Endothelial cell of umbilical vein (primary cell): ENCODE measurements at regions of chr3 and their contacts with region 1.

Region 1: DNA sequence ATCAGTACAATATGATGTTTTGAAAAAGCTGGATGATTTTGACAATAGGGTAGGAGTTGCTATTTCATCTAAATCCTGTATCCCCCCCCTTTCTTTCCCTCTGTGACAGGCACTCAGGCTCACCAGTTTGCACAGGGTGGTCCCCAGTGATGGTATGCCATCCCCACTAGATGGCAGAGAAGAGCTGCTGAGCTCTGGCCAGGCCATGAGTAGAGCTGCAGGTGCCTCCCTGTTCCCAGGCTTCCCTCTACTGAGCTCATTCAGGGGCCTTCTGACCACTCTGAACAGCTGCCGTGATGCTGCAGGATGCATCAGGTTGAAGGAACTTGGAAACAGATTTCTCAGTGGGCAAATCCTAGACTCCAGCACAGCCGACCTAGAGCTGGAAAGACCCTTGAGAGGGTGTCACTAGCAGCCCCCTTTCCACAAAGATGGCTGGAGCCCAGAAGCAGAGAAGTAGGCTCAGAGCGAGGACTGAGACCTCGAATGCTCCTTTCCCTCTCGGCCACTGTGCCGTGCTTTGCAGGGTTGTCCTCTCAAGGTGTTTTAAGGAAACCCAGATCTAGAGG is 45.1 kb downstream of the EFCAB12 start:
- DNase-seq: peak; percentile 71
- H3K4me3 ChIP-seq: no peak overlapping the region
- H3K27ac ChIP-seq: no peak overlapping the region
- H3K4me1 ChIP-seq: peaks cover 19% of the 10 kb centered on the region
- H3K27me3 ChIP-seq: no peaks in the 10 kb centered on the region
- CTCF ChIP-seq: peak; percentile 93 to 95
- POLR2A ChIP-seq: peak; percentile 34

Region 2: GRCh38 chr3:129352650-129353588 is 30.5 kb before region 1 on chr3:
- CTCF ChIA-PET with region 1: interaction called, 10 read pairs
- POLR2A ChIA-PET with region 1: no interaction called
- dilution Hi-C with region 1: no loop called
- intact Hi-C with region 1: no loop called
- DNase-seq: peak; percentile 60
- H3K4me3 ChIP-seq: no peak overlapping the region
- H3K27ac ChIP-seq: no peak overlapping the region
- H3K4me1 ChIP-seq: peaks cover 15% of the 10 kb centered on the region
- H3K27me3 ChIP-seq: no peaks in the 10 kb centered on the region
- CTCF ChIP-seq: no peak
- POLR2A ChIP-seq: no peak

Region 3: GRCh38 chr3:129404610-129405009 is 21.2 kb after region 1 on chr3:
- CTCF ChIA-PET with region 1: interaction called, 22 read pairs
- POLR2A ChIA-PET with region 1: no interaction called
- dilution Hi-C with region 1: no loop called
- intact Hi-C with region 1: loop called (anchors 2 kb)
- DNase-seq: no peak
- H3K4me3 ChIP-seq: no peak overlapping the region
- H3K27ac ChIP-seq: no peak overlapping the region
- H3K4me1 ChIP-seq: no peaks in the 10 kb centered on the region
- H3K27me3 ChIP-seq: peaks cover 0 to 5% of the 10 kb centered on the region in 2 experiments
- CTCF ChIP-seq: no peak
- POLR2A ChIP-seq: no peak

Region 4: GRCh38 chr3:129439817-129440617 is 56.6 kb after region 1 on chr3 and contains the starts of genes IFT122 and MBD4:
- CTCF ChIA-PET with region 1: interaction called, 14 read pairs
- POLR2A ChIA-PET with region 1: interaction called, 7 read pairs
- dilution Hi-C with region 1: no loop called
- intact Hi-C with region 1: loop called (anchors 2 kb)
- DNase-seq: peak; percentile 100
- H3K4me3 ChIP-seq: peak within 1 kb of the TSS; percentile 70 to 81 (median 72)
- H3K27ac ChIP-seq: peak within 1 kb of the TSS; percentile 75
- H3K4me1 ChIP-seq: peaks cover 44% of the 10 kb centered on the region
- H3K27me3 ChIP-seq: no peaks in the 10 kb centered on the region
- CTCF ChIP-seq: no peak
- POLR2A ChIP-seq: peak; percentile 79
- total RNA-seq, gene IFT122: 36.6 and 41.7 TPM in 2 replicates
- total RNA-seq, gene MBD4: 33.2 and 39.5 TPM in 2 replicates

Region 5: DNA sequence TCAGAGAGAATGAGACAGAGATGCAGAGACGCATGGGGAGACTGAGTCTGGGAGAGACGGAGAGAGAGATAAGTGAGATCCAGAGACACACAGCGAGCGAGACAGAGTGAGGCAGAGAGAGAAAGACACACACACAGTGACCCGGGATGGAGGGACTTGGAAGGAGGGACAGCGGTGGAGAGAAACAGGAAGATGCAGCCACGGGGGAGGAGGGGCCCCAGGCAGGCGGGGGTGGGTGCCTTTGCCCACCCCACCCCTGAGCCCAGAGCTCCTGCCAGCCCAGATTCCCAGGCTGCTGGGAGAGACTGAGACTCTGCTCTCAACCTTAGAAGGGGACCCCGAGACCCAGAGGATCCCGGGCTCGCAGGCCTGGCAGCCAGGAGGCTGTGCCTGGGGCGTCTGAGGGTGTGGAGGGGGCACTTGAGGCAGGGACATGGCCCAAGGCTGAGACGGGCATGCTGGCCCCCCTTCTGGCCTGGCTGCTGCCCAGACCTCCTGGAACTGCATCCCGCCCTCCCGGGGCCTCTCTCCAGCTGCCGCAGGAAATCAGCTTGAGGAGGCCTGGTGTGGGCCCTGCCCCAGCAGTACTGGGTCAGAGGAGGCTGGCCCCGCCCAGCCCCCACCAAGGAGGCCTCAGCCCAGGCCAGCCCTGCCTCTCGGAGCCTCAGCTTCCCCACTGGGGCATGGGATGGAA is 177.7 kb after region 1 on chr3:
- CTCF ChIA-PET with region 1: interaction called, 11 read pairs
- POLR2A ChIA-PET with region 1: no interaction called
- dilution Hi-C with region 1: no loop called
- intact Hi-C with region 1: loop called (anchors 5 kb)
- DNase-seq: peak; percentile 82
- H3K4me3 ChIP-seq: no peak overlapping the region
- H3K27ac ChIP-seq: peak overlapping the region; percentile 26
- H3K4me1 ChIP-seq: peaks cover 42% of the 10 kb centered on the region
- H3K27me3 ChIP-seq: no peaks in the 10 kb centered on the region
- CTCF ChIP-seq: no peak
- POLR2A ChIP-seq: peak; percentile 44

Region 6: DNA sequence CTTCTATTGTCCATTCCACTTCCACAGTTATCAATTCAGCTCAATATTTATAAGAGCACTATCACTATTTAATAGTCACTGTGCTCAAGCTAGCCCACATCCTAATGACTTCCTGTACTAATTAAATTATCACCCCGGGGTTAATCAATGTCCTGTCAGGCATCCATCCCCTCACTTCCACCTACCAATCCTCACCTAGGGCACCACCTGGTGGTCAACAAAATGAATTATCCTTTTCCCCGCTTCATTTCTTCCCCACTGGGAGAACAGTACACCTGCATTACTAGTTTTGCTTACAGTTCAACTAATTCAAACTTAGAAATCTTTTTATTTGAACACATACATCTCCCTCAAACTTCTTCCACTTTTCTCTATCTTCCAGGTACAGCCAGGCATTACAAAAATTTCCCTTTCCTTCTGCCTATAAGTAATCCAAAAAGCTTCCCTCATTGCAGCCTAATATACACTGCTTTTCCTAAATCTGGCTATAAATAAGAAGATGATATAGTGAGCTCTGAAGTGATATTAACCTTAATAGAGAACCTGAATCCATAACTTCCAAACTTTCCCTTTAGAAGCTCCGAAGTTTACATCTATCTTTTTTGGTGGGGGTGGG is 441.7 kb after region 1 on chr3:
- CTCF ChIA-PET with region 1: interaction called, 12 read pairs
- POLR2A ChIA-PET with region 1: no interaction called
- dilution Hi-C with region 1: no loop called
- intact Hi-C with region 1: loop called (anchors 1 kb)
- DNase-seq: peak; percentile 59
- H3K4me3 ChIP-seq: no peak overlapping the region
- H3K27ac ChIP-seq: no peak overlapping the region
- H3K4me1 ChIP-seq: peaks cover 6% of the 10 kb centered on the region
- H3K27me3 ChIP-seq: no peaks in the 10 kb centered on the region
- CTCF ChIP-seq: peak; percentile 51 to 54
- POLR2A ChIP-seq: no peak